ENCODE measurements at regions of chr4 and their contacts with region 1.

Region 1: GRCh38 chr4:168585168-168586091 is 88.6 kb downstream of the PALLD start:
- DNase-seq: peak in 1 of 2 experiments; percentile 60
- H3K4me3 ChIP-seq: no peak overlapping the region
- H3K27ac ChIP-seq: peak overlapping the region; percentile 98
- H3K4me1 ChIP-seq: peaks cover 54% of the 10 kb centered on the region
- H3K27me3 ChIP-seq: no peaks in the 10 kb centered on the region
- CTCF ChIP-seq: peak; percentile 37; the same call in 1 of the 2 replicates

Region 2: GRCh38 chr4:168309781-168310180 is 275.6 kb before region 1 on chr4:
- CTCF ChIA-PET with region 1: no interaction called
- POLR2A ChIA-PET with region 1: no interaction called
- intact Hi-C with region 1: no loop called
- DNase-seq: no peak
- H3K4me3 ChIP-seq: no peak overlapping the region
- H3K27ac ChIP-seq: no peak overlapping the region
- H3K4me1 ChIP-seq: peaks cover 10% of the 10 kb centered on the region
- H3K27me3 ChIP-seq: no peaks in the 10 kb centered on the region
- CTCF ChIP-seq: no peak

Region 3: DNA sequence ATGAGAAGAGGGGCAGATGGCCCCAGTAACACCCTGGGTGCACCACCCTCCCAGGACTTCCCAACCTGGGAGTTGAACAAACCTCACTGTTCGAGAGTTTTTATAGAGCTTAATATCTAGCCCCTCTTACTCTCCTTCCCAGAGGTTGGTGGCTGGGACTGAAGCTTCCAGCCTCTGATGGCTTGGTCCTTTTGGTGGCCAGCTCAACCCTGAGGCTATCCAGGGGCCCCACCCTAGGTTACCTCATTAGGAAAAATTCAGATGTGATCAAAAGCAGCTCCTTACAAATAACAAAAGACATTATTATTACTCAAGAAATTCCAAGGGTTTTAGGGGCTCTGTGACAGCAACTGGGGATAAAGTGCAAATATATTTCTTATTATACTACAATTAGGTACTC is 124.5 kb before region 1 on chr4:
- CTCF ChIA-PET with region 1: no interaction called
- POLR2A ChIA-PET with region 1: no interaction called
- intact Hi-C with region 1: no loop called
- DNase-seq: no peak
- H3K4me3 ChIP-seq: no peak overlapping the region
- H3K27ac ChIP-seq: no peak overlapping the region
- H3K4me1 ChIP-seq: no peaks in the 10 kb centered on the region
- H3K27me3 ChIP-seq: no peaks in the 10 kb centered on the region
- CTCF ChIP-seq: no peak

Region 4: DNA sequence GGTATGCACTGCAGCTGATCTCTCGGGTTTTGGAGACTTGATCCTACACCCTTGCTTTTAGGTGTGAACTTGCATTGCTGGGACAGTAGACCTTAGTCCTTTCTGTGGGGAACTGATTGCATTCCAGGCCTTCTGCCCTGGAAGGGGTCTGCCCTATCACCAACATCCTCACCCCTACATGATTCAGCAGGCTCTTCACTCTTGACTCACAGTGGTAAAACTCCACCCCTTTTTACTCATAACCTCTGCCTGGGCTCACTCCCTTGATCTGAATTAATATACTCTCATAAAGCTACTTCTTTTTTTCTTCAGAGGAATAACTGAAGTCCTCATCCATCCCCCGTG is 98.5 kb before region 1 on chr4:
- CTCF ChIA-PET with region 1: no interaction called
- POLR2A ChIA-PET with region 1: interaction called, 6 read pairs
- intact Hi-C with region 1: loop called (anchors 2 kb)
- DNase-seq: peak in 1 of 2 experiments; percentile 78
- H3K4me3 ChIP-seq: peak overlapping the region; percentile 23; the same call in 1 of the 2 replicates
- H3K27ac ChIP-seq: peak overlapping the region; percentile 92
- H3K4me1 ChIP-seq: peaks cover 55% of the 10 kb centered on the region
- H3K27me3 ChIP-seq: no peaks in the 10 kb centered on the region
- CTCF ChIP-seq: no peak

Region 5: GRCh38 chr4:168569066-168569970 is 16.1 kb before region 1 on chr4:
- CTCF ChIA-PET with region 1: no interaction called
- POLR2A ChIA-PET with region 1: no interaction called
- intact Hi-C with region 1: loop called (anchors 2 kb)
- DNase-seq: peak in 1 of 2 experiments; percentile 62
- H3K4me3 ChIP-seq: no peak overlapping the region
- H3K27ac ChIP-seq: no peak overlapping the region
- H3K4me1 ChIP-seq: no peaks in the 10 kb centered on the region
- H3K27me3 ChIP-seq: no peaks in the 10 kb centered on the region
- CTCF ChIP-seq: no peak

Region 6: GRCh38 chr4:168656055-168656660 is 70.7 kb after region 1 on chr4:
- CTCF ChIA-PET with region 1: interaction called, 4 read pairs
- POLR2A ChIA-PET with region 1: interaction called, 9 read pairs
- intact Hi-C with region 1: loop called (anchors 5 kb)
- DNase-seq: peak in 1 of 2 experiments; percentile 85
- H3K4me3 ChIP-seq: peak overlapping the region; percentile 53; the same call in 1 of the 2 replicates
- H3K27ac ChIP-seq: peak overlapping the region; percentile 73
- H3K4me1 ChIP-seq: peaks cover 35% of the 10 kb centered on the region
- H3K27me3 ChIP-seq: no peaks in the 10 kb centered on the region
- CTCF ChIP-seq: no peak

Region 7: GRCh38 chr4:168815379-168816345 is 230.2 kb after region 1 on chr4:
- CTCF ChIA-PET with region 1: no interaction called
- POLR2A ChIA-PET with region 1: no interaction called
- intact Hi-C with region 1: loop called (anchors 5 kb)
- DNase-seq: no peak
- H3K4me3 ChIP-seq: no peak overlapping the region
- H3K27ac ChIP-seq: no peak overlapping the region
- H3K4me1 ChIP-seq: 0 out of 2 replicates have a peak, but pooled peaks cover 3% of the 10 kb centered on the region
- H3K27me3 ChIP-seq: no peaks in the 10 kb centered on the region
- CTCF ChIP-seq: no peak

Region 8: DNA sequence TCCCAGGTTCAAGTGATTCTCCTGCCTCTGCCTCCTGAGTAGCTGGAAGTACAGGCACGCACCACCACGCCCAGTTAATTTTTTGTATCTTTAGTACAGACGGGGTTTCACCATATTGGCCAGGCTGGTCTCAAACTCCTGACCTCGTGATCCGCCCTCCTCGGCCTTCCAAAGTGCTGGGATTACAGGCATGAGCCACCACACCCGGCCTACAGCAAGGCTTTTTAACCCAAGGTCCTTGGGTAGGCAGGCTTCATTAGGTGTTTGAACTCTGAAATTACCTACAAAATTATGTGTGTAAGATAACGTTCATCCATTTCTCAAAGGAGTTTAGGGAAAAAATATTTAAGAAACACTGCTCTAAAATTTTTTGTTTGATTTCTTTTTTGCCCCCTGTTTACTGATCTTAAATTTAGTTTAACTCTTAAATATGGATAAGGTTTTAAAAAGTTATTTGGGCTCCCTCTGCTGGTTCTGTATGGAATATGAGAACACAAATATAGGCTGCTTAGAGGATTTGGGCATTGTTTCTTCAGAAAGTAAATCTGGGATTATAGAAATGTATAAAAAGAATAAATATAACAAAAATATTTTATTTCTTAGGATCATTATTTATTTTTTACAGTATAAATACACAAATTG is 331.8 kb after region 1 on chr4:
- CTCF ChIA-PET with region 1: no interaction called
- POLR2A ChIA-PET with region 1: no interaction called
- intact Hi-C with region 1: loop called (anchors 1 kb)
- DNase-seq: no peak
- H3K4me3 ChIP-seq: no peak overlapping the region
- H3K27ac ChIP-seq: no peak overlapping the region
- H3K4me1 ChIP-seq: no peaks in the 10 kb centered on the region
- H3K27me3 ChIP-seq: no peaks in the 10 kb centered on the region
- CTCF ChIP-seq: peak; percentile 80